PC-9 (cell line): ENCODE measurements at regions of chr19 and their contacts with region 1.

Region 1: GRCh38 chr19:41376241-41376997 is at the start of gene TMEM91:
- DNase-seq: no peak
- H3K4me3 ChIP-seq: no peak within 1 kb of the TSS
- H3K27ac ChIP-seq: no peak within 1 kb of the TSS
- H3K4me1 ChIP-seq: no peaks in the 10 kb centered on the region
- H3K27me3 ChIP-seq: no peaks in the 10 kb centered on the region
- CTCF ChIP-seq: no peak
- total RNA-seq, gene TMEM91: 21.9 and 31.0 TPM in 2 replicates

Region 2: DNA sequence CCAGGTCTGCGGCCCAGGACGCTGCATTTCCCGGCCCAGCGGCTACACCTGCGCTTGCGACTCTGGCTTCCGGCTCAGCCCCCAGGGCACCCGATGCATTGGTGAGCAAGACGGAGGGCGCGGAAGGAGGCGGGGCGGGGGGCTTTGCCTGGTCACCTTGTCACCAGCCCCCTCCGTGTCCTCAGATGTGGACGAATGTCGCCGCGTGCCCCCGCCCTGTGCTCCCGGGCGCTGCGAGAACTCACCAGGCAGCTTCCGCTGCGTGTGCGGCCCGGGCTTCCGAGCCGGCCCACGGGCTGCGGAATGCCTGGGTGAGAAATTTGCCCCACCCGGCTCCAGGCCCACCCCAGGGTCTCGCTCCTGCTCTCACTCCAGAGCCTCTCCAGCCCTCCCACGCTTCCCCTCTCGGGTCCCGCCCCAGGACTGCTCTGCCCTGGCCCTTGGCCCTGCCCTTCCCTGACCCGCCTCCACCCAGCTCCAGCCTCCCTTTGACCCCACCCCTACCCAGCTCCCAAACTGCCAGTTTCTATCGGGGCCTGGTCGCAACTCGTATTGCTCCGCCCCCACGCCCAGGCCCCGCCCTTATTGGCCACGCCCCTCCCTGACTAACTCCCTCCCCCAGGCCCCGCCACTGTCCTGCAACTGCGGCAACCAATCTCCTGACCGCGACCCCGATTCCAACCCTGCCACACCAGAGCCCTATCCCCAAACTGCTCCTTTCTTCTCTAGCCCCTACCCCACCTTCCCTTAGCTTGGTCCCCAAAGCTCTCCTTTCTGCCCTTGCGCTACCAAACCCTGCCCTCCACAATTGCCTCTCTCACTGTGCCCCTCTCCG is 766.6 kb before region 1 on chr19:
- CTCF ChIA-PET with region 1: no interaction called
- POLR2A ChIA-PET with region 1: interaction called, 16 read pairs
- intact Hi-C with region 1: no loop called
- DNase-seq: peak; percentile 77 to 95
- H3K4me3 ChIP-seq: peak overlapping the region; percentile 63
- H3K27ac ChIP-seq: no peak overlapping the region
- H3K4me1 ChIP-seq: peaks cover 18% of the 10 kb centered on the region
- H3K27me3 ChIP-seq: no peaks in the 10 kb centered on the region
- CTCF ChIP-seq: no peak

Region 3: GRCh38 chr19:41123716-41124294 is 252.6 kb before region 1 on chr19:
- CTCF ChIA-PET with region 1: no interaction called
- POLR2A ChIA-PET with region 1: no interaction called
- intact Hi-C with region 1: no loop called
- DNase-seq: no peak
- H3K4me3 ChIP-seq: no peak overlapping the region
- H3K27ac ChIP-seq: no peak overlapping the region
- H3K4me1 ChIP-seq: no peaks in the 10 kb centered on the region; the same call in 1 of the 2 replicates
- H3K27me3 ChIP-seq: no peaks in the 10 kb centered on the region
- CTCF ChIP-seq: no peak

Region 4: DNA sequence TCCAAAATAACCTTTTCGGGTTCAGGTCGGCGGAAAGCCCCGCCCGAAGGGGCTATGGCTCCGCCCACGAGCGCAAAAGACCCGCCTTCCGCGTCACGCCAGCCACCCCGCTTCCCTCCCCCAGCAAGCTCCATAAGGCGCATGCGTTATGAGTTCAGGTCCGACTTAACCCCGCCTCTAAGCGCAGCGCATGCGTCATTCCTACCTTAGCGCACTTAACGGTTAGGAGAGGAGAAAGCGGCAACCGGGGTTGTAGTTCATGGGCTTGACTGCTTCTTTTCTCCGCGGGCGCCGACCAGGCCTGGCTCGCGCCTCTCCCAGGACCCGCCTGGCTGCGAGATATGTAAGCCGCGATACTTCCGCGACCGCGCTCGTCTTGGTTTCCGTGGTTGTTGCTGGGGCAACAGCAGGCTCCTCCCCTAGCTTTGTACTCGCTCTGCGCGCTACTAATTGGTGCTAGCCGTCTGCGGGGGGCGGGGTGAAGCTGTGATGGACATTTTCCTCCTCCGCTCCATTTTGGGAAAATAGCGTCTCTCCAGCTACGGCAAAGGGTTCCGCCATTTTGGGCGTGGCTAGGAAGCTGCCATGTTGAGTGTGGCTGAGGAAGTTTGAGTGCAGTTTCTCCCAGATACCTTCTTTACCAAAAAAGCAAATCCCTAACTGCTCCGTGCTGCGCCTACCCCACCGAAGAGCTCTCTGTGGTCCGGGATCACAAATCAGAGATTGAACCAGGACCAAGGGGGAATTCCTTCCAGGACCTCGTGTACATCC is 12.5 kb before region 1 on chr19 and contains the start of gene B9D2:
- CTCF ChIA-PET with region 1: interaction called, 4 read pairs
- POLR2A ChIA-PET with region 1: interaction called, 23 read pairs
- intact Hi-C with region 1: no loop called
- DNase-seq: peak; percentile 93 to 97
- H3K4me3 ChIP-seq: peak within 1 kb of the TSS; percentile 78
- H3K27ac ChIP-seq: peak within 1 kb of the TSS; percentile 88
- H3K4me1 ChIP-seq: peaks cover 21% of the 10 kb centered on the region
- H3K27me3 ChIP-seq: no peaks in the 10 kb centered on the region
- CTCF ChIP-seq: no peak
- total RNA-seq, gene B9D2: 8.0 and 10.8 TPM in 2 replicates

Region 5: DNA sequence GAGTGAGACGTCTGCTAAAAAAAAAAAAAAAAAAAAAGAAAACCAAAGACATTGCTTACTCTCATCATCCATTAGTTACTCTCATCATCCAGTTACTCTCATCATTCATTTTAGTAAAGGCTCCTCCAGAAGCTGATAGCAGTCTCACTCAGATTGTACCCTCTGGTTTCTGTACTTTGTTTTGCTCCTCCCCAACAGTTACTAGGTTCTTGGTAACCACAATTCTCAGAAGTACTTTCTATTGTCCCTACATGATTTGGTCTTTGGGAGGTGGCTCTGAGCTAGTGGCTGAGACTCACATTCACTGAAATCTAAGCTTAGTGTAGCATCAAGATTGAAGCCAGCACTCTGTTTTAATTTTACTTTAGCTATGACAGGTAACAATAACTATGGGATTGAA is 80.8 kb after region 1 on chr19:
- CTCF ChIA-PET with region 1: no interaction called
- POLR2A ChIA-PET with region 1: interaction called, 13 read pairs
- intact Hi-C with region 1: no loop called
- DNase-seq: no peak
- H3K4me3 ChIP-seq: no peak overlapping the region
- H3K27ac ChIP-seq: no peak overlapping the region
- H3K4me1 ChIP-seq: no peaks in the 10 kb centered on the region
- H3K27me3 ChIP-seq: peaks cover 86% of the 10 kb centered on the region
- CTCF ChIP-seq: no peak

Region 6: DNA sequence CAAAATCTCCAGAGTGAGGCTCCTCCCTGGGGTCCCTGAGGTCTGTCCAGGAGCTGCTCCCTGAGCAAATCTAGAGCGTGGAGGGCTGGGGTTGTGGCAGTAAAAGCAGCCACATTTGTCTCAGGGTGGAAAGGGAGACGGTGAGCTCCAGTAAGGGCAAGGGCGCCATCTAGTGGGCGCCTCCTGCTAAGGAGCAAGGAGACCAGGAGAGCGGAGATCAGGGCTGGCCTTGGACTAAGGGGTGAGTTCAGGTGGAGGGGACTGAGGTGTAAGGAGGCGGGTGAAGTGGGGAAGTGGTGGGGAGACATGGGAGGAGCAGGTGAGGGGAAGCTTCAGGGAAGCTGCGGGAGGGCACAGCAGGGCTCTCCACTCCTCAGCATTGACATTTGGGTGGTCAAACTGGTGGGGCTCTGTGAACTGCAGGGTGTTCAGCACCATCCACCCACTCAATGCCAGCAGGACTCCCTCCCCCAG is 194.3 kb after region 1 on chr19:
- CTCF ChIA-PET with region 1: no interaction called
- POLR2A ChIA-PET with region 1: interaction called, 15 read pairs
- intact Hi-C with region 1: no loop called
- DNase-seq: peak in 1 of 2 experiments; percentile 69
- H3K4me3 ChIP-seq: no peak overlapping the region
- H3K27ac ChIP-seq: no peak overlapping the region
- H3K4me1 ChIP-seq: no peaks in the 10 kb centered on the region
- H3K27me3 ChIP-seq: peaks cover 57% of the 10 kb centered on the region
- CTCF ChIP-seq: peak; percentile 93